A673 (cell line): ENCODE measurements at regions of chr7 and their contacts with region 1.

Region 1: GRCh38 chr7:30877015-30877769 is 34.5 kb upstream of the AQP1 start:
- DNase-seq: no peak
- H3K4me3 ChIP-seq: no peak overlapping the region
- H3K27ac ChIP-seq: no peak overlapping the region
- H3K4me1 ChIP-seq: no peaks in the 10 kb centered on the region
- H3K27me3 ChIP-seq: no peaks in the 10 kb centered on the region
- CTCF ChIP-seq: no peak

Region 2: GRCh38 chr7:30112103-30112713 is 765.0 kb before region 1 on chr7:
- CTCF ChIA-PET with region 1: no interaction called
- POLR2A ChIA-PET with region 1: interaction called, 12 read pairs
- intact Hi-C with region 1: no loop called
- DNase-seq: no peak
- H3K4me3 ChIP-seq: no peak overlapping the region
- H3K27ac ChIP-seq: no peak overlapping the region
- H3K4me1 ChIP-seq: peaks cover 10% of the 10 kb centered on the region
- H3K27me3 ChIP-seq: no peaks in the 10 kb centered on the region
- CTCF ChIP-seq: no peak